ENCODE measurements at regions of chr1 and their contacts with region 1.

Region 1: GRCh38 chr1:91885716-91886506 is at the start of gene TGFBR3:
- DNase-seq: peak; percentile 70
- ATAC-seq: peak; percentile 83
- H3K4me3 ChIP-seq: peak within 1 kb of the TSS; percentile 87 to 100 (median 97)
- H3K27ac ChIP-seq: peak within 1 kb of the TSS; percentile 81
- H3K4me1 ChIP-seq: peaks cover 52% of the 10 kb centered on the region
- H3K27me3 ChIP-seq: peaks cover 0 to 4% of the 10 kb centered on the region in 2 experiments; a peak in 1 of 5 replicates
- CTCF ChIP-seq: peak; percentile 45
- EP300 ChIP-seq: peak in 1 of 2 experiments; percentile 38; a peak in 1 of 4 replicates
- POLR2A ChIP-seq: peak; percentile 67 to 80
- RAD21 ChIP-seq: peak; percentile 75
- total RNA-seq, gene TGFBR3: 44.8 and 76.5 TPM in 2 replicates

Region 2: DNA sequence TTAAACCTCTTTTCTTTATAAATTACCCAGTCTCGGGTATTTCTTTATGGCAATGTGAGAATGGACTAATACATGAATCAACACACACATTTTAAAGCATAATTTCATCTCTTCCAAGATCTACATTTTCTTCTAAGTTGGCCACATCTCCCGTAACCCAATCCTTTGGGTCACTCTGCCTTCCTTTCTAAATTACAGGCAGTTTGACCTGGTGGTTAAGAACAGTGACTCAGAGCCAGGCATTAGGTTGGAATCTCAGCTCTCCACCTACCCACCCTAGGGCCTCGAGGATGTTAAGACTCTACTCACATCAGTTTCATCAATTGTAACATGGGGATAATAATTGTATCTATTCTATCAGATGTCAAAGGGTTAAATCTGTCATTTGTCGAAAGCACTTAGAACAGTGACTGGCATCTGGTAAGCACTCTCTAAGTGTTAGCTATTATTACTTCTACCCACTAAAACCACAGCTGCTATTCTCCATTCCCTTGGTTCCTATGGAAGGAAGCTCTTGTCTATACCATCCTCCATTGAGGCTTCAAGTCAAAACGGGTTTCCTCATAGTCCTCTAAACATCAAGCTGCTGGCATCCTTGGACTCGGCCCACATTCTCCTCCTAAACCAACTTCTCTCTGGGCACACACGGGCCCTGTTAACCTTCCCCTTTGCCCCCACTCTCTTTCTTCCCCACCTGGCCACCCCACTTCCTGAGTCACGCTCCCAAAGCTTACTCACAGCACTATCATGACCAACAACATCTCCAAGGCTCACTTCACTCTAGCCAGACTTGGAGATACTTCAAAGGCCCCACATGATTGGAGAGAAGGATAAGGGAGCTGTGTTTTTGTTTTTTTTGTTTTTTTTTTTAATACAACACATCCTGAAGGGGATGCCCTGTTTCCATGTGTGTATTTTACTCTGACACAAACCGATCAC is 116.9 kb before region 1 on chr1:
- CTCF ChIA-PET with region 1: no interaction called
- POLR2A ChIA-PET with region 1: no interaction called
- in situ Hi-C with region 1: no loop called
- intact Hi-C with region 1: loop called (anchors 10 kb)
- DNase-seq: no peak
- ATAC-seq: no peak
- H3K4me3 ChIP-seq: no peak overlapping the region
- H3K27ac ChIP-seq: no peak overlapping the region
- H3K4me1 ChIP-seq: peaks cover 69% of the 10 kb centered on the region
- H3K27me3 ChIP-seq: no peaks in the 10 kb centered on the region
- CTCF ChIP-seq: no peak
- EP300 ChIP-seq: no peak
- POLR2A ChIP-seq: no peak
- RAD21 ChIP-seq: no peak

Region 3: DNA sequence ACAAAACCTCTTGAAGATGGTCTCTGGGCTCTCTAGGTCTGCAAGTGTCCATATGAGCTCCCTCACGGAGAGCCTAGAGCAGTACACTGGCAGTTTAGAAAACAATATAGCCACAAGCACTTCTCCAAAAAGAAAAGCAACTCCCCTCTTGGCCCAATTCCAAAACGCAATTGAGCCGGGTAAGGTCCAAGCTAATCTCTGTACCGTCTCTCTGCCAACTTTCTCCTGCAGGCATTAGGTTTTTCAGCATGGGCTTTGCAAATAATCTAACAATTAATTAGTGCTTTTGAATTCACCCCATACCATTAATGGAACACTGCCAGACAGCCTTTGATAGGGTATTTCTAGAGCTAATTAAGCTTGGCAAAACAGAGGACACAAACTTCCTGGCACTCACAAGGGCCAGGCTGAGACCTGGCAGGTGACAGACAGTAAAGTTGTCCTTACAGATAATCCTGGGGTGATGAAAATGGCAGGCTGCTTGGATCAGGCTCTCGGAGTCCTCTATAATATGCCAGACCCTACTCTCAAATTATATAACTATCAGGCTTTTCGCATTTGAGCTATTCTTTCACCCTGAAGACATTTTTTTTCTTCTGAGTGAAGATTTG is 39.8 kb before region 1 on chr1:
- CTCF ChIA-PET with region 1: no interaction called
- POLR2A ChIA-PET with region 1: interaction called, 8 read pairs
- in situ Hi-C with region 1: no loop called
- intact Hi-C with region 1: loop called (anchors 5 kb)
- DNase-seq: peak; percentile 74
- ATAC-seq: peak; percentile 66
- H3K4me3 ChIP-seq: peak overlapping the region in 2 of 3 experiments; percentile 17 to 34; a peak in 2 of 6 replicates
- H3K27ac ChIP-seq: peak overlapping the region; percentile 66
- H3K4me1 ChIP-seq: peaks cover 97% of the 10 kb centered on the region
- H3K27me3 ChIP-seq: no peaks in the 10 kb centered on the region
- CTCF ChIP-seq: no peak
- EP300 ChIP-seq: no peak
- POLR2A ChIP-seq: no peak
- RAD21 ChIP-seq: no peak

Measured in HepG2 (cell line).